ENCODE measurements at regions of chr2 and their contacts with region 1.

Region 1: GRCh38 chr2:231713730-231714430 is 5.6 kb downstream of the PTMA start:
- DNase-seq: peak; percentile 91
- H3K4me3 Mint-ChIP-seq: peak overlapping the region; percentile 56
- H3K27ac Mint-ChIP-seq: peak overlapping the region; percentile 91
- H3K4me1 Mint-ChIP-seq: peaks cover 32% of the 10 kb centered on the region
- H3K27me3 Mint-ChIP-seq: no peaks in the 10 kb centered on the region

Region 2: DNA sequence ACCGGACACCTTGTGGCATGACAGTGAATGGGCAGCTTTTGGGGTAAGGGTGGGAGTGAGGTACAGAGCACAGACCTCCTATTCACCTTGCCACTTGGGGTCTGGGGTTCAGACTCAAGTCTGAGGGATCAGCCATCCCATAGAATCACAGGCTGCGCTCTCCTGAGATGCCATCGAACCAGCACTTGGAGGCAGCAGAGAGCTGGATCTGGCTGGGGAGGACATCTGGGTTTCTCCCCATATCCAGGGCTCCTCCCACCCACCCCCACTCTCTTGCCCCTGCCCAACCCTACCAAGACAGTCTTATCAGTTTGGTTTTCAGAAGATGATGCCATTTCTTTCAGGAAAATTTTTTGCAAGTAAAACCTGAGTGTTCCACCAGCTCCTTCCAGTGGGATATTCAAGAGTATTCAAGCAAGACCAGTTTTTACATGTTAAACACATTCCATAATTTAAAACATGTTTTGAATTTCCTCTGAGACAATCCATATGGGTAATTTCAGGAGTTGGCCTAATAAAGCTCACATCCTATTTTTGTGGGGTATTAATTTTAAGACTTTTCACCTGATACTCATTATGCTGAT is 150.4 kb before region 1 on chr2:
- CTCF ChIA-PET with region 1: no interaction called
- POLR2A ChIA-PET with region 1: no interaction called
- DNase-seq: peak; percentile 41
- H3K4me3 Mint-ChIP-seq: no peak overlapping the region
- H3K27ac Mint-ChIP-seq: no peak overlapping the region
- H3K4me1 Mint-ChIP-seq: peaks cover 2% of the 10 kb centered on the region
- H3K27me3 Mint-ChIP-seq: no peaks in the 10 kb centered on the region

Region 3: GRCh38 chr2:231612179-231613053 is 101.5 kb before region 1 on chr2:
- CTCF ChIA-PET with region 1: interaction called, 111 read pairs
- POLR2A ChIA-PET with region 1: interaction called, 5 read pairs
- DNase-seq: peak; percentile 90
- H3K4me3 Mint-ChIP-seq: peak overlapping the region; percentile 72
- H3K27ac Mint-ChIP-seq: peak overlapping the region; percentile 97
- H3K4me1 Mint-ChIP-seq: peaks cover 56% of the 10 kb centered on the region
- H3K27me3 Mint-ChIP-seq: no peaks in the 10 kb centered on the region

Region 4: DNA sequence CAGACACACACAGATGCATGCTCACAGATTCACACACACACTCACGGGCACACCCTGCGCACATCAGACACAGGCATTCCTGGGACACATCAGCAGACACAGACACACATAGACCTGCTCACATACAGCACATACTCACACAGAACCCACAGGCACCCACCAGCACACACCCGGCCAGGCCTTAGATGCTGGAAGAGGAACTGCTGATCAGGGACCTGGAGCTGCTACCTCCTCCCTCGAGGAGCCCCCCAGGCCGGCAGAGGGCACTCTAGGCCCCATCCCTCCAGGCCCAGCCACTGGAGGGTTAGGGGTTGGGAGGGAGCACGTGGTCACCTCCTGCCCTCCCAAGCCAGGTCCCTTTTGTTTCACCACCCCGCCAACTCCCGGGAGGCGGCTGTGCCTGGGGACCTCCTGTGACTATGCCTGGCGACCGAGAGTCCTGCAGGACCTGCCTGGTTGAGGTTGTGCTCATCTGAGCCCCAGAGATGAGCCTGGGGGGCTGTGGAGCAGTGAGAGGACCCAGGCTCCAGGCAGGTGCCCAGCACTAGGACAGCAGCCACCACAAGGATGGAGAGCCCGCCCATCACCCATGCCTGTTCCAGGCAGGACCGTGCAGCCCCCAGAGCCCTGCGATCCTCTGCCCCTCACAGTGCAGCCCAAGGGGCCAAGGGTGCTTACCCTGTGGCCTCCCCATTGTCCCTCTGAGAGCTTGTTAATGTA is 26.6 kb before region 1 on chr2:
- CTCF ChIA-PET with region 1: interaction called, 64 read pairs
- POLR2A ChIA-PET with region 1: interaction called, 3 read pairs
- DNase-seq: peak; percentile 54
- H3K4me3 Mint-ChIP-seq: no peak overlapping the region
- H3K27ac Mint-ChIP-seq: no peak overlapping the region
- H3K4me1 Mint-ChIP-seq: peaks cover 10% of the 10 kb centered on the region
- H3K27me3 Mint-ChIP-seq: peaks cover 5% of the 10 kb centered on the region

Region 5: DNA sequence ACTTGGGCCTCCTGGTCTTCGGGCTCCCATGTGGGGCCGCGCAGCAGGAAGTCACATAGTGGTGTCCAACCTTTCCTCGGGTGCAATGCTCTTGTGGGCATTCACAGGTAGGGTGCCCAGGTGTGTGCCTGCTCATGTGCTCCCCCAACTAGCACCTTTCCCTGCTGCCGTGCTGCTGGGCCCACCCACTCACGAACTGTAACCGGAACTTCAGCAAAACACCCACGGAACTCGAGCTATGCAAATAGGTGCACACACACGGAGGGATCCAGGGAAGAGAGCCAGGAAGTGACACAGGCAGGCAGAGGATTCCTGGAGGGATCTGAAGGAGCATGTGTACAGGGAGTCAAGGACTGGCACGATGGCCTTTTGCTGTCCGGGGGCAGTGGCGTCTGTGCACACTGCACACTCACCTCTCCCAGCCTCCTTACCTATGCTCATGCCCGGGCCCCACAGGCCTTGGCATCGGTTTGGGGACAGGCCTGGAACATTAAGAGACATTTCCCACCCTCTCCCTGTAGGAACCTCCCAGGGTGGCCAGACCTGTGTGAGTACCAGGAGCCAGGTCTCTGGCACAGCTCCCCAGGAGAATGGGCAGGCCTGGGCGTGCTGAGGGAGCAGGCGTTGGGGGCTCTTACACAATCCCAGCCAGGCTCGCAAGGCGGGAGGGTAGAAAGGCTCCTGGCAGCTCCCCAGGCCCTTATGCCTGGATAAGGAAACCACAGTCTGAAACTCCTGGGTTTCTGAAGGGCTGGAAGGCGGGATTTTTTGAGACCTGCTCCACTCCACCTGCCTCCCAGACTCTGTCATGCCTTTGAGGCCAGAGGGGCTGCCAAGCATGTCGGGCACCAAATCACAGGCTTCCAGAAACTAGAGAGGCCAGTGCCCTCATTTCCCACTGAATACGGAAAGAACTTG is 12.2 kb before region 1 on chr2:
- CTCF ChIA-PET with region 1: interaction called, 44 read pairs
- POLR2A ChIA-PET with region 1: no interaction called
- DNase-seq: no peak
- H3K4me3 Mint-ChIP-seq: no peak overlapping the region
- H3K27ac Mint-ChIP-seq: no peak overlapping the region
- H3K4me1 Mint-ChIP-seq: peaks cover 17% of the 10 kb centered on the region
- H3K27me3 Mint-ChIP-seq: peaks cover 2% of the 10 kb centered on the region

Region 6: GRCh38 chr2:231961349-231962166 is 247.7 kb after region 1 on chr2 and contains the start of gene DIS3L2:
- CTCF ChIA-PET with region 1: no interaction called
- POLR2A ChIA-PET with region 1: no interaction called
- DNase-seq: peak; percentile 81
- H3K4me3 Mint-ChIP-seq: peak within 1 kb of the TSS; percentile 82
- H3K27ac Mint-ChIP-seq: peak within 1 kb of the TSS; percentile 92
- H3K4me1 Mint-ChIP-seq: peaks cover 35% of the 10 kb centered on the region
- H3K27me3 Mint-ChIP-seq: peaks cover 5% of the 10 kb centered on the region
- total RNA-seq, gene DIS3L2: 40.2 to 43.4 TPM

Measured in activated CD4-positive, alpha-beta T cell treated with anti-CD3 and anti-CD28 coated beads, Interleukin-2, amount 10 ng/mL, durations not matched to agents 7 days and 5 days (primary cell).